Dorsolateral prefrontal cortex (tissue), 120 donors: ENCODE measurements at regions of chr2 and their contacts with region 1.

Region 1: DNA sequence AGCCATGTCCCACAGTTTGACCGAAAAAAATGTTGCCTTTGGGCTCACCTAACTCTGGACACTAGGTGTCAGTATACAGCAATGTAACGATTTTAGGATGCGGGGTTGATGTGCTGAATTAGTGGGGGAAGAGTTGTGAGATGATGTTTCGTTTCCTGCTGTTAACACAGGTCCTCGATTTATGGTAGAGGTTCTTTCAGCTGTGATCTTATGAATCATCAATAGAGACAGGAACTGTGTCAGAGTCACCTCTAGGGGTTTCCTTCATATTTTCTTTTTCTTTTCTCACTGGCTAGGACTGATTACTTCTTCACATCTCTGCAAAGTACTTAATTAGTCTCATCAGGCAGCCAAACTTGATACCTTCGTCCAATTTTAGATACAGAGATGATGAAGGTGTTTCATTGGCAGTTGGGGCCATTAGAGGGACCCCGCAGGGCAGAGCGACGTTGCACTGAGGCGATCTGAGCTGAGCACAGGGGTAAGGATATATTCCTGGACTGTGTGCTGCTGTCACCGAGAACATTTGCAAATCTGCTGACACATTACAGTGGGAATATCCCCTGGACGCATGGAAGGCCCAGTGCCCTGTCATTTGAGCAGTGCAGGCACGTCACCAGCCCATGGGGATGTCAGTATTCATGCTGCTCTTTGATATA is 10.2 kb upstream of the MMADHC start:
- DNase-seq: peak in 4 of 10 donors; percentile 12 to 42 (median 36)
- H3K4me3 ChIP-seq: peak overlapping the region in 57 of 59 donors; percentile 12 to 66 (median 47)
- H3K27ac ChIP-seq: peak overlapping the region in 5 of 59 donors; percentile 4 to 23 (median 14)
- H3K27me3 ChIP-seq: no peaks in the 10 kb centered on the region
- CTCF ChIP-seq: peak; percentile 69 to 93 (median 84)

Region 2: DNA sequence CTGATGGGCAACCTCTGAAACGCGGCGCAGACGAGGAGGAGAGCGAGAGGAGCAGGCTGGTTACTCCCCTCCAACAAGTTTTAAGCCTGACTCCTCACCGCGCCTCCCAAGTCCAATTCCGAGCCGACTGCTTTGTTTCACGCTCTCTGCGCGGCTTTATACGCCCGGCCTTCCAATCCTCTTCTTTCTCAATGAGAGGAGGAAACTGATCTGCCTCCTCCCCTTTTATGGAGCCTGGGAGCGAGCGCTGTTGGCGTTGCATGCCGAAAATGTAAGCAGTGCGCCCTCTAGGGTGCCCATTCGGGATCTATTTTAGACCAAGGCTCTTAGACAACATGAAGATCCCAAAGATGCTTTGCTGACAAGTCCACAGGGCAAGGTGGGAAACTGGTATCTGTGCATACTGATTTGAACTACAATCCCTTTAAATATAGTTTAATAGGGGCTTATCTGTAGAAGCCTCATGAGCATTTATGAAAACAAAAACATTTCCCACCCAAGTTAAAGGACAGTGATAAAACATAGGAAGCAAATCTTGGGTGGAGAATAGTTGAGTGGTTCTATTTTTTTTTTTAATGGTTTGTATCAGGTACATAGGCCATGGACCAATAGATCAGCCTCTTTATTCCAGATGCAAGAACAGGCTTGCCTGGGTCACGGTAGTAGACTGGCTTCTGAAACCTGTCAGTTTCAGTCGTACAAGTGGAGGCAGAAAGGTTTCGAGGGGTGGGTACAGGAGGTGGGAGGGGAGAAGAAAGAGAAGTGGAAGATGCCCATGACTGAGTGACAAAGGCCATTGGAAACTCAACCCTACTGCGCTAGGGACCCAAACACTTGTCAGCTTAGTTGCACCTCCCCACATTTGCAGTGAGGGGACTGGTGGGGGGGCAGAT is 890.0 kb after region 1 on chr2 and contains the start of gene RND3:
- intact Hi-C with region 1: loop called (anchors 2 to 5 kb)
- DNase-seq: peak; percentile 70 to 96 (median 90)
- H3K4me3 ChIP-seq: peak within 1 kb of the TSS; percentile 44 to 90 (median 69)
- H3K27ac ChIP-seq: peak within 1 kb of the TSS in 44 of 59 donors; percentile 11 to 94 (median 82)
- H3K27me3 ChIP-seq: peaks cover 0 to 17% (median 0%) of the 10 kb centered on the region in 45 donors
- CTCF ChIP-seq: peak; percentile 74 to 97 (median 88)
- total RNA-seq, gene RND3: 3.9 to 35.6 (median 10.6) TPM

Region 3: GRCh38 chr2:151051574-151052220 is 1453.9 kb after region 1 on chr2:
- intact Hi-C with region 1: loop called (anchors 5 kb)
- DNase-seq: peak in 1 of 10 donors; percentile 18
- H3K4me3 ChIP-seq: no peak overlapping the region
- H3K27ac ChIP-seq: no peak overlapping the region
- H3K27me3 ChIP-seq: peaks cover 0 to 9% (median 0%) of the 10 kb centered on the region in 45 donors
- CTCF ChIP-seq: peak; percentile 65 to 91 (median 76)

Region 4: DNA sequence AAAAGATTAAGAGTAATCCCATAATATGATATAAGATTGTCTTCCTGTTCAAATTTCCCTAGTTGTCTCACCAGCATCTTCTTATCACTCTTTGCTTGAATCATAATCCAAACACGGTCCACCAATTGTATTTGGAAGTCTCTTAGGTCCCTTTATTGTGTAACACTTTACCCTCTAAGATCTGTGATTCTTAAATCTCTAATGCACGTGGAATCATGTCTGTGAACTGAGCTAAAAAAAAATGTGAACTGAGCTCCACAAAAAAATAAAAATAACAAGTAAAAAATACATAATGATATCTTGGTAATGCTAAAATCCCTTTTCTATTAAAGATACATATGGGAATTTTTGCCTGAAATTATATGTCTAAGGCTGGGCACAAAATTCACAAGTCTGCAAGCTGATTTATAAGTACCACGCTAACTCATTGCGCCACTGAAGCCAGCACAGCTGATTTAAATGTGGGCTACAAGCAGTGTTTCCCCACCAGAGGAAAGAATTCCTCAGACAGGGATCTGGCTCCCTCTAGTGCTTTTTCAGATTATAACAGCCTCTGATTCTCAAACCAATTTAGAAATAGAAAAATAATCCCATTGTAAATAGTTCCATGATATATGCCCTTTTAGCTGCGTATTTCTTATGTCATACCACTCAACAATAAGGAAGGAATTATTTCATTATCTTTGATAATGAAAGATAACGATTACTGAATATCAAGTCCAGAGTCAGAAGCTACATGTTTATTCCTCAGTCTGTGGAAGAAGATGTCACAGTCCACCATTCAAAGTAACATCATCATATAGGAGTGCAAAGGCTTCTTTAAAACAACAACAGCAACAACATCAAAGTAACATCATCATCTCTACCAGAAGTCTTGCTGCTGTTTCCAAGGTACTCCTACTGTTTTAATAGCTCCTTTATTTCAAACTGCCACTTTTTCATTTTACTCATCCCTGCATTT is 1641.0 kb after region 1 on chr2:
- intact Hi-C with region 1: loop called (anchors 2 to 5 kb)
- DNase-seq: peak in 7 of 10 donors; percentile 28 to 75 (median 53)
- H3K4me3 ChIP-seq: no peak overlapping the region
- H3K27ac ChIP-seq: no peak overlapping the region
- H3K27me3 ChIP-seq: no peaks in the 10 kb centered on the region
- CTCF ChIP-seq: peak; percentile 74 to 98 (median 90)